Common myeloid progenitor, CD34-positive (primary cell): ENCODE measurements at regions of chr12 and their contacts with region 1.

Region 1: GRCh38 chr12:108234158-108234557 is 105.0 kb downstream of the CMKLR1 start:
- DNase-seq: peak; percentile 44 to 64 (median 61)
- H3K4me3 ChIP-seq: no peak overlapping the region
- H3K27ac ChIP-seq: no peak overlapping the region
- H3K4me1 ChIP-seq: no peaks in the 10 kb centered on the region
- H3K27me3 ChIP-seq: peaks cover 0 to 20% (median 5%) of the 10 kb centered on the region in 5 experiments

Region 2: DNA sequence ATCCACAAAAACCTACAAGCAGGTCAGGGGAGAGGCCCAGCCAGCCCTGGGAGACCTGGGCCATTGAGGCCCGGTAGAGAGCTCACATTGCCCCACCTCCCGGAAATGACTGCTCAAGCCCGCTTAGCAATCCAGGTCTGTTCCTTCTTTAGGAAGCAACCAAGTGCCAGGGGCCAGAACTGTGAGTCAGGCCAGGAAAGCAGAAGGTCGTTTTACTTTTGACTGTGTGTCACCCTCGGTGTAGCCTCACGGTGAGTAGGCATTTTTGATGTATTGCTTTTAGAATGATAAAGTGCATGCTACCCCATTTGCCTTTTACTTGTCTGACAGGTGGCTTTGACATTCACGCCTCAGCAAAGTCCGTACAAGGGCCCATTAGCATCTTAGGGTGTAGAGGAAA is 573.9 kb before region 1 on chr12:
- CTCF ChIA-PET with region 1: no interaction called
- POLR2A ChIA-PET with region 1: no interaction called
- DNase-seq: peak in 2 of 3 donors; percentile 52 to 64
- H3K4me3 ChIP-seq: no peak overlapping the region
- H3K27ac ChIP-seq: no peak overlapping the region
- H3K4me1 ChIP-seq: peaks cover 0 to 6% (median 0%) of the 10 kb centered on the region in 4 experiments
- H3K27me3 ChIP-seq: no peaks in the 10 kb centered on the region

Region 3: GRCh38 chr12:108187831-108188230 is 46.3 kb before region 1 on chr12:
- CTCF ChIA-PET with region 1: no interaction called
- POLR2A ChIA-PET with region 1: no interaction called
- DNase-seq: no peak
- H3K4me3 ChIP-seq: no peak overlapping the region
- H3K27ac ChIP-seq: no peak overlapping the region
- H3K4me1 ChIP-seq: no peaks in the 10 kb centered on the region
- H3K27me3 ChIP-seq: peaks cover 0 to 18% (median 7%) of the 10 kb centered on the region in 5 experiments

Region 4: GRCh38 chr12:108457006-108457733 is 223.0 kb after region 1 on chr12:
- CTCF ChIA-PET with region 1: interaction called, 37 read pairs
- POLR2A ChIA-PET with region 1: no interaction called
- DNase-seq: peak; percentile 49 to 78 (median 74)
- H3K4me3 ChIP-seq: no peak overlapping the region
- H3K27ac ChIP-seq: no peak overlapping the region
- H3K4me1 ChIP-seq: peaks cover 0 to 7% (median 4%) of the 10 kb centered on the region in 4 experiments
- H3K27me3 ChIP-seq: peaks cover 0 to 41% (median 16%) of the 10 kb centered on the region in 5 experiments

Region 5: DNA sequence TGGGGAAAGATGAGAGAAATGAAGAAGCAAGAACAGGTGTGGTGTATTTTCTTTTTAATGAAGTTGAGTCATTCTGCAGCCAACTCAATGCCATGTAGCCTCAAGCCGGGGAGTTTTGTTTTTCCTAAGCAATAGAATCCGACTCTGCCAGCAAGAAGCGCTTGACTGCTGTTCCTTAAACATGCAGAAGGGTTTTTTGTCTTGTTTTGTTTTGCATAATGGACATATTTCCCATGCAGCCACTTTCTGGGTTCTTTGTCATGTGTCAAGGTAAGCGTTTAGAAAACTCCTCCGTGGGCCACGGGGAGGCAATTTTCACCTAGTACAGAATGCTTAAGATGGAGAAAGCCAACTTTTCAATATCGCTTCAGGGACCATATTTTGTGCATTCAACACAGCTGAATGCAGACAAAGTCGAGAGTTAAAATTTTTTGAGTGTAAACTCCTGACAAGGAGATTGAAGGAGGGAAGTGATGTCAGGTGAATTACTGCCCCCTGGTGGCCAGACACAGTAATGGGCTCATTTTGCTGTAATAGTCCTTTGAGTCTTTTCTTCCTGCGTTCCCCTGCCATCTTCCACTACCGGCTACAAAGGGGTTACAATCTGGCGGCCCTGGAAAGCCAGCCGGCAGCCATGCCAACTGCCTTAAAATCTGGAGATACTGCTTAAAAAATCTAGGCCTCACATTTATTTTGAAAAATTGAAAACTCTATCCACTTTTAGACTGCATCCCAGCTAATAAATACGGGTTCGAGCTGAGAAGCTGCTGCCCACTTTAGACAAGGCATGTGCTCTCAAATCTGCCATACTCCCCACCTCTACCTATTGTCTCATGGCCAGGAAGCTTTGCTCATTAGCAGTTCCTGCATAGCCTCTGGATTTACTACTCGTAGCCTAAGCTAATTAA is 277.7 kb after region 1 on chr12:
- CTCF ChIA-PET with region 1: interaction called, 11 read pairs
- POLR2A ChIA-PET with region 1: no interaction called
- DNase-seq: peak; percentile 78 to 88 (median 83)
- H3K4me3 ChIP-seq: peak overlapping the region in 2 of 7 experiments; percentile 8 to 12
- H3K27ac ChIP-seq: no peak overlapping the region
- H3K4me1 ChIP-seq: peaks cover 0 to 18% (median 16%) of the 10 kb centered on the region in 4 experiments
- H3K27me3 ChIP-seq: peaks cover 0 to 3% (median 0%) of the 10 kb centered on the region in 5 experiments